ENCODE measurements at regions of chr12 and their contacts with region 1.

Region 1: GRCh38 chr12:102061560-102062418 is at the start of gene WASHC3:
- DNase-seq: peak; percentile 94 to 97 (median 94)
- H3K4me3 ChIP-seq: peak within 1 kb of the TSS; percentile 59 to 78
- H3K4me3 Mint-ChIP-seq: peak within 1 kb of the TSS; percentile 94 to 100 (median 98)
- H3K27ac ChIP-seq: peak within 1 kb of the TSS; percentile 97
- H3K27ac Mint-ChIP-seq: peak within 1 kb of the TSS; percentile 98 to 99 (median 99)
- H3K4me1 ChIP-seq: peaks cover 31% of the 10 kb centered on the region
- H3K4me1 Mint-ChIP-seq: peaks cover 27 to 46% (median 36%) of the 10 kb centered on the region in 4 donors
- H3K27me3 ChIP-seq: no peaks in the 10 kb centered on the region
- H3K27me3 Mint-ChIP-seq: peaks cover 2 to 3% of the 10 kb centered on the region in 2 donors
- total RNA-seq, gene WASHC3: 44.6 to 46.5 TPM

Region 2: DNA sequence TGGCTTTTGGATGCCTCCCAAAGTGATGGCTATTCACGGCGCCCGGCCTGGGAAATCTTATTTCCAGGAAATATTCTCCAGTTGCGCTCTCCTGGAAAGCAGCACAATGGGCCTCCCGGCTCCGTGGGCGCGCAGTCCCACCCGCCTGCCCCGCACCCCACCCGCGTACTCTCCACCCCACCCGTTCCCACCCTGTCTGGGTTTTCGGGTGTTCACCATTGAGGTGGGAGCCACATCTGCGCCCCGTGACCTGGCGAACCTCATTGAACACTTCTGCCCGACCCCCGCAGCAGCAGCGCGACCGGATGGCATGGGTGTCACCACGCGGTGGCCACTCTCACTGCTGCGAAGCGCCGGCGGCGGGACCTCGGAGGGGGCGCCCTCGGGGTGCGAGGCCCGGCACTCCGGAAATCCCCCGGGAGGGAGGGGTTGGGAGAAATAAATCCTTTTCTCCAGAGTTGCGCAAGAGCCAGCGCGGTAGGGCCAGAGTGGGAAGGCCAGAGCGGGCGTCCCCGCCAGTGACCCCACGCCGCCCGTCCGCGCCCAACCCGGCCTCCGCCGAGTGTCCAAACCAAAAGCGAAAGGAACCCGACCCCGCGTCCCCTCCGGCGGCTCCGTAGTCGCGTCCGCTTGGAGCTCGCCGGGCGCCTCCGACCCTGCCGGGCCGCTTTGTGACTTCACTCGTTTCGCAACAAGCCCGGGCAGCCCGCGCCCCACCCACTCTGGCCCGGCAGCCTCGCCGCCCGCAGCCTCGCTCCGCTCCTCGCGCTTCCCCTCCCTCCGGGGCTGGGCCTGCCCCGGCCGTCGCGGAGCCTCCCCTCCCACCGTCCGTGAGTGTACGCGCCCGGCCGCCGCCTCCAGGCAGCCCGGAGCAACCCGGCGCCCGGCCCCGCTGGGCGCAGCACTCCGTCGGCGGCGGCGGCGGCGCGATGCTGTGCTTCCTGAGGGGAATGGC is 184.7 kb before region 1 on chr12 and contains the start of gene DRAM1:
- CTCF ChIA-PET with region 1: no interaction called
- POLR2A ChIA-PET with region 1: interaction called, 5 read pairs
- intact Hi-C with region 1: loop called (anchors 1 kb)
- DNase-seq: peak; percentile 66 to 74 (median 69)
- H3K4me3 ChIP-seq: peak within 1 kb of the TSS; percentile 58 to 60
- H3K4me3 Mint-ChIP-seq: peak within 1 kb of the TSS; percentile 83 to 95 (median 90)
- H3K27ac ChIP-seq: peak within 1 kb of the TSS; percentile 78
- H3K27ac Mint-ChIP-seq: peak within 1 kb of the TSS; percentile 79 to 93 (median 89)
- H3K4me1 ChIP-seq: peaks cover 14% of the 10 kb centered on the region
- H3K4me1 Mint-ChIP-seq: peaks cover 7 to 13% (median 13%) of the 10 kb centered on the region in 4 donors
- H3K27me3 ChIP-seq: no peaks in the 10 kb centered on the region
- H3K27me3 Mint-ChIP-seq: no peaks in the 10 kb centered on the region
- total RNA-seq, gene DRAM1: 2.3 to 2.7 TPM

Region 3: GRCh38 chr12:102119674-102120563 is 58.1 kb after region 1 on chr12 and contains the starts of genes NUP37 and PARPBP:
- CTCF ChIA-PET with region 1: no interaction called
- POLR2A ChIA-PET with region 1: interaction called, 23 read pairs
- intact Hi-C with region 1: loop called (anchors 1 kb)
- DNase-seq: peak; percentile 92 to 93 (median 92)
- H3K4me3 ChIP-seq: peak within 1 kb of the TSS; percentile 86 to 95
- H3K4me3 Mint-ChIP-seq: peak within 1 kb of the TSS; percentile 86 to 96 (median 92)
- H3K27ac ChIP-seq: peak within 1 kb of the TSS; percentile 93
- H3K27ac Mint-ChIP-seq: peak within 1 kb of the TSS; percentile 88 to 96 (median 94)
- H3K4me1 ChIP-seq: peaks cover 24% of the 10 kb centered on the region
- H3K4me1 Mint-ChIP-seq: peaks cover 13 to 35% (median 19%) of the 10 kb centered on the region in 4 donors
- H3K27me3 ChIP-seq: no peaks in the 10 kb centered on the region
- H3K27me3 Mint-ChIP-seq: no peaks in the 10 kb centered on the region
- total RNA-seq, gene NUP37: 17.0 to 18.8 TPM
- total RNA-seq, gene PARPBP: 2.3 to 2.6 TPM